Mammary epithelial cell (primary cell): ENCODE measurements at regions of chr5 and their contacts with region 1.

Region 1: GRCh38 chr5:68272289-68272688 is 56.7 kb downstream of the PIK3R1 start:
- DNase-seq: no peak
- H3K4me3 ChIP-seq: no peak overlapping the region
- H3K27ac ChIP-seq: no peak overlapping the region
- H3K4me1 ChIP-seq: peaks cover 63% of the 10 kb centered on the region
- H3K27me3 ChIP-seq: no peaks in the 10 kb centered on the region
- CTCF ChIP-seq: peak; percentile 22 to 27

Region 2: DNA sequence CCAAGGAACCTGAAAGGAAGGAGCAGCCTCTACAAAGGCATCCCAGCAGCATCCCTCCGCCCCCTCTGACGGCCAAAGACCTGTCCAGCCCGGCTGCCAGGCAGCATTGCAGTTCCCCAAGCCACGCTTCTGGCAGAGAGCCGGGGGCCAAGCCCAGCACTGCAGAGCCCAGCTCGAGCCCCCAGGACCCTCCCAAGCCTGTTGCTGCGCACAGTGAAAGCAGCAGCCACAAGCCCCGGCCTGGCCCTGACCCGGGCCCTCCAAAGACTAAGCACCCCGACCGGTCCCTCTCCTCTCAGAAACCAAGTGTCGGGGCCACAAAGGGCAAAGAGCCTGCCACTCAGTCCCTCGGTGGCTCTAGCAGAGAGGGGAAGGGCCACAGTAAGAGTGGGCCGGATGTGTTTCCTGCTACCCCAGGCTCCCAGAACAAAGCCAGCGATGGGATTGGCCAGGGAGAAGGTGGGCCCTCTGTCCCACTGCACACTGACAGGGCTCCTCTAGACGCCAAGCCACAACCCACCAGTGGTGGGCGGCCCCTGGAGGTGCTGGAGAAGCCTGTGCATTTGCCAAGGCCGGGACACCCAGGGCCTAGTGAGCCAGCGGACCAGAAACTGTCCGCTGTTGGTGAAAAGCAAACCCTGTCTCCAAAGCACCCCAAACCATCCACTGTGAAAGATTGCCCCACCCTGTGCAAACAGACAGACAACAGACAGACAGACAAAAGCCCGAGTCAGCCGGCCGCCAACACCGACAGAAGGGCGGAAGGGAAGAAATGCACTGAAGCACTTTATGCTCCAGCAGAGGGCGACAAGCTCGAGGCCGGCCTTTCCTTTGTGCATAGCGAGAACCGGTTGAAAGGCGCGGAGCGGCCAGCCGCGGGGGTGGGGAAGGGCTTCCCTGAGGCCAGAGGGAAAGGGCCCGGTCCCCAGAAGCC is 1106.5 kb before region 1 on chr5:
- CTCF ChIA-PET with region 1: interaction called, 6 read pairs
- dilution Hi-C with region 1: no loop called
- in situ Hi-C with region 1: no loop called
- intact Hi-C with region 1: loop called (anchors 2 kb)
- DNase-seq: peak; percentile 82
- H3K4me3 ChIP-seq: no peak overlapping the region
- H3K27ac ChIP-seq: peak overlapping the region; percentile 65
- H3K4me1 ChIP-seq: peaks cover 40% of the 10 kb centered on the region
- H3K27me3 ChIP-seq: no peaks in the 10 kb centered on the region
- CTCF ChIP-seq: peak; percentile 71 to 88

Region 3: GRCh38 chr5:68222310-68222709 is 50.0 kb before region 1 on chr5:
- CTCF ChIA-PET with region 1: no interaction called
- dilution Hi-C with region 1: no loop called
- in situ Hi-C with region 1: no loop called
- intact Hi-C with region 1: no loop called
- DNase-seq: no peak
- H3K4me3 ChIP-seq: no peak overlapping the region
- H3K27ac ChIP-seq: no peak overlapping the region
- H3K4me1 ChIP-seq: peaks cover 57% of the 10 kb centered on the region
- H3K27me3 ChIP-seq: no peaks in the 10 kb centered on the region
- CTCF ChIP-seq: no peak